Caco-2 (cell line): ENCODE measurements at regions of chr6 and their contacts with region 1.

Region 1: DNA sequence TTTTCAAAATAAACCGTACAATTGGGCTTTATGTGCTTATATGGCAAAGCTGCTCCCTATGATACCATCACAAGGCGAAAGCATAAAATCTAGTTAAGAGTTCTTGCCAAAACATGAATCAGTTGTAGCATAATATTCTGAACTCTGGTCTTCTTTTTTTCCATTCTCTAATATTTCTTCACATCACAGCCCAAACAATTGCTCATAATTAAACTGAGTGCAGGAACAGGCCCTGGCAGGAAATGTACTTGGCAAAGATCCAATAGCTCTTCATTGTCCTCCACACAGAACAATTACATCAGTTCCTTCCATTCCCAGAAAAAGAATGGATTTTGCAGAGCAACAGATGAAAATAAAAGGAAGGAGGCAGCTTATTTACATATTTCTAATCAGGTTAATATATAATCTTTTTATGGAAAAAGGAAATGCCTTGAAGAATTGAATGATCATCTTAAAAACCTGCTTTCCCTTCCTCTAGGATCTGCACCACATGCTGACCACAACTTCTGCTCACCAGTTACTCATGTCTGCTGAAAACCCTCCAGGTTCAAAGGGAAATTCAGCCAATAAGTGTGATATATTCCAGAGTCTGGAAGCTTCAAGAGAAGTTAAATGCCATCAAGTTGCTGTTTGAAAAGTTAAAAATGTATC is 123.3 kb upstream of the COL21A1 start:
- DNase-seq: no peak
- H3K4me3 ChIP-seq: no peak overlapping the region
- H3K4me3 Mint-ChIP-seq: peak overlapping the region; percentile 69
- H3K27ac Mint-ChIP-seq: no peak overlapping the region
- H3K4me1 ChIP-seq: peaks cover 31% of the 10 kb centered on the region
- H3K4me1 Mint-ChIP-seq: peaks cover 33% of the 10 kb centered on the region
- H3K27me3 ChIP-seq: no peaks in the 10 kb centered on the region
- H3K27me3 Mint-ChIP-seq: no peaks in the 10 kb centered on the region
- CTCF ChIP-seq: no peak

Region 2: DNA sequence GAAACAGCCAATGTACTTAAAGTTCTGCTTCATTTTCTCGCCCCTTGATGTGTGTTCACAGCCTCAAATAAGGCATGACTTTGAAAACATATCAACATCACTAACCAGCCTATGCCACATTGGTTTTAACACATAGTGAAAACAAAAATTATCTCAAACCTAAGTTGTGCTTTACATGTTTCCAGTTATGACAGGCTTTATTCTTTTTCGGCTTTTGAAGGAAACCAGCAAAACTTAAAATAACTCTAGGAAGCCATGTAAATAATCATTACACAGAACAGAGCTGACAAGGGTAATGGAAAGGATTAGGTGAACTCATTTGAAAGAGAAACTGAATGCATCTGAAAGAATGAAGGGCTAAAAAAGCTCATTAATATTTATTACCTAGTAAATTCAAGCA is 537.4 kb before region 1 on chr6:
- CTCF ChIA-PET with region 1: no interaction called
- POLR2A ChIA-PET with region 1: no interaction called
- intact Hi-C with region 1: no loop called
- DNase-seq: no peak
- H3K4me3 ChIP-seq: no peak overlapping the region
- H3K4me3 Mint-ChIP-seq: no peak overlapping the region
- H3K27ac Mint-ChIP-seq: no peak overlapping the region
- H3K4me1 ChIP-seq: no peaks in the 10 kb centered on the region
- H3K4me1 Mint-ChIP-seq: no peaks in the 10 kb centered on the region
- H3K27me3 ChIP-seq: no peaks in the 10 kb centered on the region
- H3K27me3 Mint-ChIP-seq: no peaks in the 10 kb centered on the region
- CTCF ChIP-seq: no peak

Region 3: GRCh38 chr6:56399250-56399671 is 28.6 kb after region 1 on chr6:
- CTCF ChIA-PET with region 1: no interaction called
- POLR2A ChIA-PET with region 1: no interaction called
- intact Hi-C with region 1: loop called (anchors 1 kb)
- DNase-seq: peak; percentile 78 to 86
- H3K4me3 ChIP-seq: no peak overlapping the region
- H3K4me3 Mint-ChIP-seq: peak overlapping the region; percentile 71
- H3K27ac Mint-ChIP-seq: peak overlapping the region; percentile 97
- H3K4me1 ChIP-seq: peaks cover 36% of the 10 kb centered on the region
- H3K4me1 Mint-ChIP-seq: peaks cover 52% of the 10 kb centered on the region
- H3K27me3 ChIP-seq: no peaks in the 10 kb centered on the region
- H3K27me3 Mint-ChIP-seq: no peaks in the 10 kb centered on the region
- CTCF ChIP-seq: no peak

Region 4: DNA sequence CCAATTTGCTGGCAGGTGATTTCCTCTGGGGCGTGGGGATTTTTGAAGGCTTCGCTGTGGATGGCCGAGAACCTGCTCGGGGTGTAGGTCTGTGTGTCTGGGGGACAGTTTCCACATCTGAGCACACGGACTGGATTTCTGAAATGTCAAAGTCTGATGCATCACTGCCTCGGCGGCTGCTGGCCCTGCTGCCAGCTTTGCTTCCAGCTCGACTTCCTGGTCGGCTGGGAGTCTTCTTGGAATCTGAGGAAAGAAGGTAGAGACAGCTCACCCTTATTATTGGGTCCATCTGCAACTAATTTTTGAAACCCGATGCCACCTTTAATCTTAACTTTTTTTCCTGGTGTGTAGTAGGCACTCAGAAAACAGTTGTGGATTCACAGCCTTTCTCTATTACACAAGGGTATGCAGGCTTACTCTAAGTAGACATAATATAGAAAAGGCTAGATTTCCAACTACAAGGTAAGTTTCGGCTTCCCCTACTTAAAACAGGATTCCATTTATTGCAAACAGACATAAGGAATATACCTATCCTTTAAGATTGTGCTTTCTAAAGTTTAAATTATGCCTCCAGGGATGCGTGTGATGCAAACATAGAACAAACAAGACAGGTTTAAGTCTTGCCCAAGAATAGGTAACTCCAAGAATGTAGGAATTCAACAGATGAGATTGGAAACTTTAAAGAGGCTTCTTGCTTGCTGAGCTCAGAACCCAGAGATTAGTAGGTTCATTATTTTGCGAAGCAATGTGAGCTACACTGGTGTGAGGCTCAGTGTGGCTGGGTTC is 88.5 kb after region 1 on chr6:
- CTCF ChIA-PET with region 1: no interaction called
- POLR2A ChIA-PET with region 1: no interaction called
- intact Hi-C with region 1: loop called (anchors 2 kb)
- DNase-seq: peak in 1 of 2 experiments; percentile 28
- H3K4me3 ChIP-seq: no peak overlapping the region
- H3K4me3 Mint-ChIP-seq: no peak overlapping the region
- H3K27ac Mint-ChIP-seq: peak overlapping the region; percentile 39
- H3K4me1 ChIP-seq: peaks cover 12% of the 10 kb centered on the region
- H3K4me1 Mint-ChIP-seq: no peaks in the 10 kb centered on the region
- H3K27me3 ChIP-seq: no peaks in the 10 kb centered on the region
- H3K27me3 Mint-ChIP-seq: no peaks in the 10 kb centered on the region
- CTCF ChIP-seq: no peak

Region 5: GRCh38 chr6:56474531-56475050 is 103.9 kb after region 1 on chr6:
- CTCF ChIA-PET with region 1: no interaction called
- POLR2A ChIA-PET with region 1: no interaction called
- intact Hi-C with region 1: no loop called
- DNase-seq: no peak
- H3K4me3 ChIP-seq: no peak overlapping the region
- H3K4me3 Mint-ChIP-seq: no peak overlapping the region
- H3K27ac Mint-ChIP-seq: no peak overlapping the region
- H3K4me1 ChIP-seq: no peaks in the 10 kb centered on the region
- H3K4me1 Mint-ChIP-seq: peaks cover 6% of the 10 kb centered on the region
- H3K27me3 ChIP-seq: no peaks in the 10 kb centered on the region
- H3K27me3 Mint-ChIP-seq: no peaks in the 10 kb centered on the region
- CTCF ChIP-seq: no peak

Region 6: DNA sequence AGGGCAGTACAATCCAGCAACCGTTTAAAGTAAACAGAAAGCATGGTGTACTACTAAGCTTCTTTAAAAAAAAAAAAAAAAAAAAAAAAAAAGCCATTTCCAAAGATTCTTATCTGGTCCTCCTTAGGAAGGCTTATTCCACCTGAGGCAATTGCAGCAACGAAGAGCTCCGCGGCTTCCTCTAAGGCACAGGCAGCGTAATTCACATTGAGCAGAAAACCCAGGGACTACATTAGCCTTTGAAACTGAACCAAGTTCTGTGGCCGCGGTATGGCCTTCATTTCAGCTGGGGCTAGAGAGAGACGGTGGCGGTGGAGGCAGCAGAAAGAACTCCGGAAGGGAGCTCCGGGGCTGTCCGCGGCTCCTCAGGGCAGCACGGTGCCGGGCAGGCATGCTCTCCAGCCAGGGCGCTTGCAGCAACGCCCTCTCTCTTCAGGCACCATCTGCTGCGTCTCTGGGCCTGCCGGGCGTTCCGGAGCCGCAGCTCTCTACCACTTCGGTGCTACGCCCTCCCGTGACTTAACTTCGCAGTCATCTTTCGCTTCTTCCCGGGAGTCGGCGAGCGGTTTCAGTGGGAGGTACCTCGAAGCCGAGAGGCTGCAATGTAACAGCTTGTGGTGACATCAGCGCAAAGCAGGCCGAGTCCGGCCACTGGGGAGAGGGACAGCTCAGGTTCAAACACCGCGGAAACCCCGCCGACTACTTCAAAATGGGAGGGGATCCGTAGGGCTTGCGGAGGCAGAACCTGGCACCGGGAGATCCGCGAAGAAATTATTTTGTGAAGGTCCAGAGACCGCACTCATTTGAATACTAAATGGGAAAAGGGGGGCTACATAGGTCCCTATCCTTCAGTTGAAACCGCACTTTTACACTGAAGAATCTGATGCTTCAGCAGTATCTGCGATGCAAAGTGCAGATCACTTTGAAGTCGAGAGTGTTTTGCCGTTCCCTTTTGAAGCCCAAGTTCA is 172.0 kb after region 1 on chr6:
- CTCF ChIA-PET with region 1: interaction called, 27 read pairs
- POLR2A ChIA-PET with region 1: interaction called, 4 read pairs
- intact Hi-C with region 1: loop called (anchors 1 kb)
- DNase-seq: peak; percentile 93 to 96
- H3K4me3 ChIP-seq: peak overlapping the region; percentile 51
- H3K4me3 Mint-ChIP-seq: no peak overlapping the region
- H3K27ac Mint-ChIP-seq: no peak overlapping the region
- H3K4me1 ChIP-seq: peaks cover 41% of the 10 kb centered on the region
- H3K4me1 Mint-ChIP-seq: no peaks in the 10 kb centered on the region
- H3K27me3 ChIP-seq: no peaks in the 10 kb centered on the region
- H3K27me3 Mint-ChIP-seq: no peaks in the 10 kb centered on the region
- CTCF ChIP-seq: peak in 1 of 2 experiments; percentile 45

Region 7: GRCh38 chr6:56570413-56571359 is 200.0 kb after region 1 on chr6:
- CTCF ChIA-PET with region 1: interaction called, 5 read pairs
- POLR2A ChIA-PET with region 1: no interaction called
- intact Hi-C with region 1: loop called (anchors 1 kb)
- DNase-seq: peak in 1 of 2 experiments; percentile 37
- H3K4me3 ChIP-seq: no peak overlapping the region
- H3K4me3 Mint-ChIP-seq: no peak overlapping the region
- H3K27ac Mint-ChIP-seq: no peak overlapping the region
- H3K4me1 ChIP-seq: no peaks in the 10 kb centered on the region
- H3K4me1 Mint-ChIP-seq: no peaks in the 10 kb centered on the region
- H3K27me3 ChIP-seq: no peaks in the 10 kb centered on the region
- H3K27me3 Mint-ChIP-seq: no peaks in the 10 kb centered on the region
- CTCF ChIP-seq: peak; percentile 30 to 57